Sciatic nerve (tissue), 2 donors: ENCODE measurements at regions of chr12 and their contacts with region 1.

Region 1: DNA sequence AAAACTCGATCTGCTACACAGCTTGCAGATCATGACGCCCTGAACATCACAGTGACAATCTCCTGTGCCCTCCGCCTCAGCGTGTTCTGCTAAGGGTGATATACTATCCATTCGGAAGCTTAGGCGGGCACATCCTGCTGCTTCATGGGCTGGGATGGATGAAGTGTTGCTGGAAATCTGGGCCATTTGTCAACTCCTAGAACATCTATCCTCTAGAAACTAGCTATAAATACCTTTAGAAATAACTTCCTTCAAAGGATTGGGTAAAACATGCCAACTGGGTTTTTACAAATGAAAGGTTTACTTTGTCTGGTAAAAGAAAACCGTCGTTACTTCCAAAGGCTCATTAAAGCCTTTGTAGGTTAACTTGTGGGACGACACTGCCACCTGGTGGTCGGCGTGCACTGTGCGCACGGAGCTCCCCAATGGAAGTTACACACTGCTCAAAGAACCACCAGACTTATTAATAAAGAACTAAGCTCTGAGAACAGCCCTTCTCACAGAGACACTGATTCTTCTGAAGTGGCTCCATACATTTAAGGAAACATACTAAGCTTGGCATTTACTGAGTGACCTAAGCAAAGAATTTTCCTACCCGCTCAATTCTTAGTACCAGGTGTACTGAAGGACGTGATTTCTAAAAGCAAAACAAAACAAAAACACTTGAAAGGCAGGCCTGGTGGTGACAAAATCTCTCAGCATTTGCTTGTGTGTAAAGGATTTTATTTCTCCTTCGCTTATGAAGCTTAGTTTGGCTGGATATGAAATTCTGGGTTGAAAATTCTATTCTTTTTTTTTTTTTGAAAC is 21.6 kb upstream of the CACNA2D4 start:
- DNase-seq: peak; percentile 95
- ATAC-seq: peak; percentile 96

Region 2: GRCh38 chr12:1634590-1635191 is 305.3 kb before region 1 on chr12:
- intact Hi-C with region 1: loop called (anchors 10 kb)
- DNase-seq: peak; percentile 89
- ATAC-seq: peak; percentile 69

Region 3: GRCh38 chr12:1661553-1662335 is 278.3 kb before region 1 on chr12:
- intact Hi-C with region 1: no loop called
- DNase-seq: peak; percentile 93
- ATAC-seq: peak; percentile 86

Region 4: GRCh38 chr12:1797991-1798640 is 141.9 kb before region 1 on chr12:
- intact Hi-C with region 1: loop called (anchors 2 kb)
- DNase-seq: no peak
- ATAC-seq: no peak

Region 5: GRCh38 chr12:1966561-1967226 is 26.7 kb after region 1 on chr12:
- intact Hi-C with region 1: no loop called
- DNase-seq: no peak
- ATAC-seq: no peak